Activated CD4-positive, alpha-beta memory T cell treated with anti-CD3 and anti-CD28 coated beads, Interleukin-2, amount 10 ng/mL, durations not matched to agents 7 days and 5 days (primary cell): ENCODE measurements at regions of chr10 and their contacts with region 1.

Region 1: GRCh38 chr10:97914837-97915211 is 65.2 kb downstream of the GOLGA7B start:
- DNase-seq: peak; percentile 76
- H3K4me3 Mint-ChIP-seq: no peak overlapping the region
- H3K27ac Mint-ChIP-seq: no peak overlapping the region
- H3K4me1 Mint-ChIP-seq: peaks cover 5% of the 10 kb centered on the region
- H3K27me3 Mint-ChIP-seq: peaks cover 18% of the 10 kb centered on the region

Region 2: DNA sequence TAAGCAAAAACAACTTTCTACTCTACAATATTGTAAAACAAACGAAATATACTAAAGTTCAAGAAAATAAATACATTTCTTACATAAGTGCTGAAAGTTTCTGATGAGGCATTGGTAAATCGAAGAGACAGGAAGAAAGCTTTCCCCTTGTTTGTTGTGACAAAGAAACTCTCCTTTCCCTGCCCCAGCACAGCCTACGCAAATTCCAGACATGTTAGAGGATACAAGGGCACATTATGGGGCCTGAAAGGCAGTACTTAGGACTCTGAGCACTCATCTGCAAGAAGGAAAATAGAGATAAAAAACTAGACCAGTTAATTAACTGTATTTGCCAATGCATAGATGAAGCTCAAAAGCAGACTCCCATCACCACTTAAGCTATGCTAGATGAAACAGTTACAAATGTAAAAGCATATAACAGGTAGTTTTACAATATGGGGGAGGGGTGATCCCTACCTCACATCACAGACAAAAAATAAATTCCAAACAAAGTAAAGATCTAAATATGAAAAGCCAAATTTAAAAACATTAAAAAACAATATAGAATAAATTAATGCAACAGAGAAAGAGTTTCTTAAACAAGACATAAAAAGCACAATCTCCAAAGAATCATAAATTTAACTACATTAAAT is 644.2 kb before region 1 on chr10:
- CTCF ChIA-PET with region 1: no interaction called
- POLR2A ChIA-PET with region 1: no interaction called
- DNase-seq: no peak
- H3K4me3 Mint-ChIP-seq: no peak overlapping the region
- H3K27ac Mint-ChIP-seq: no peak overlapping the region
- H3K4me1 Mint-ChIP-seq: peaks cover 1% of the 10 kb centered on the region
- H3K27me3 Mint-ChIP-seq: no peaks in the 10 kb centered on the region

Region 3: GRCh38 chr10:97903128-97904017 is 11.5 kb before region 1 on chr10:
- CTCF ChIA-PET with region 1: interaction called, 29 read pairs
- POLR2A ChIA-PET with region 1: no interaction called
- DNase-seq: no peak
- H3K4me3 Mint-ChIP-seq: no peak overlapping the region
- H3K27ac Mint-ChIP-seq: no peak overlapping the region
- H3K4me1 Mint-ChIP-seq: no peaks in the 10 kb centered on the region
- H3K27me3 Mint-ChIP-seq: peaks cover 13% of the 10 kb centered on the region